ENCODE measurements at regions of chr17 and their contacts with region 1.

Region 1: GRCh38 chr17:3723556-3724369 is at the start of gene HASPIN:
- DNase-seq: peak; percentile 96
- ATAC-seq: peak; percentile 86
- H3K4me3 Mint-ChIP-seq: peak within 1 kb of the TSS; percentile 83
- H3K27ac Mint-ChIP-seq: peak within 1 kb of the TSS; percentile 93
- H3K4me1 Mint-ChIP-seq: peaks cover 58% of the 10 kb centered on the region
- H3K27me3 Mint-ChIP-seq: no peaks in the 10 kb centered on the region
- total RNA-seq, gene HASPIN: 21.0 to 25.2 TPM

Region 2: GRCh38 chr17:3048767-3049471 is 674.8 kb before region 1 on chr17:
- CTCF ChIA-PET with region 1: no interaction called
- POLR2A ChIA-PET with region 1: no interaction called
- intact Hi-C with region 1: loop called in 1 of 2 experiments (anchors 5 kb)
- DNase-seq: peak; percentile 98
- ATAC-seq: peak; percentile 99
- H3K4me3 Mint-ChIP-seq: peak overlapping the region; percentile 86
- H3K27ac Mint-ChIP-seq: peak overlapping the region; percentile 83
- H3K4me1 Mint-ChIP-seq: peaks cover 4% of the 10 kb centered on the region
- H3K27me3 Mint-ChIP-seq: no peaks in the 10 kb centered on the region

Region 3: DNA sequence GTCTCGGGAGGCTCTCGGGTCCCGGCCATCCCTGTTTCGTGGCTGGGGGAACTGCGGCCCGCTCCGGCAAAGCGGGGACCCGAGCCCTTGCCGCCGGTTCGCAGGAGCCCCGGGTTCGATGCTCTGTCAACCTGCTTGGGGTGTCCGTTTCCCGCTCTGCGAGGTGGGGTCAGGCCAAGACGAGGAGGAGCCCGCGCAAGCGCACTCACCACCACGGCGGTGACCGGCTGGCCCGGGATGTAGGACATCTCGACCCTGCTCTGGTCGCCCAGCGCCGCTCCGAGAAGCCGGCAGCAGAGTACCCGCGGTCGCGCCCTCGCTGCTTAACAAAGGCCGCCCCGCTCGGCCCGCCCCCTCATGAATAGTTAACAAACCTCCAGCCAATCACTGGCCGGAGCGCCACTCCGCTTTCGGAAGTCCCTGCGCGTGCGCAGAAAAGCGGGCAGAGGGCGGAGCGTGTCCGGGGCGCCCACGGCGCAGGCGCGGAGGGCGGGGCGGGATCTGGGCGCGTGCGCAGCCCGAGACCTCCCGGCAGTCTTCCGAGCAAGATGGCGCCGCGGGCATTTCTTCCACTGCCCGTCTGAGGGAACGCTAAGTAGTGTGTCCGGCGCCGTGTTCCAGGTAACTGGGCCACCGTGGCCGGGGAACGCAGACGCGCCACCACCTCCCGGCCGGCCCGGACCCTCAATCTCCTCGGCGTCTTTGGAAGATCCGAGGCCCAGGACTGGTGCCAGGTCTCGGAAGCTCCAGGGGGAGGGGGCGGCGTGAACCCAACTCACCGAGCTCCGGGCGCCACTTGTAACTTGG is 55.3 kb before region 1 on chr17 and contains the starts of genes EMC6 and TAX1BP3:
- CTCF ChIA-PET with region 1: interaction called, 3 read pairs
- POLR2A ChIA-PET with region 1: interaction called, 4 read pairs
- intact Hi-C with region 1: loop called in 1 of 2 experiments (anchors 1 kb)
- DNase-seq: peak; percentile 99
- ATAC-seq: peak; percentile 94
- H3K4me3 Mint-ChIP-seq: peak within 1 kb of the TSS; percentile 97
- H3K27ac Mint-ChIP-seq: peak within 1 kb of the TSS; percentile 94
- H3K4me1 Mint-ChIP-seq: peaks cover 21% of the 10 kb centered on the region
- H3K27me3 Mint-ChIP-seq: no peaks in the 10 kb centered on the region
- total RNA-seq, gene EMC6: 43.6 to 44.3 TPM
- total RNA-seq, gene TAX1BP3: 12.0 to 14.6 TPM

Region 4: GRCh38 chr17:3695723-3696411 is 27.9 kb before region 1 on chr17 and contains the start of gene P2RX5:
- CTCF ChIA-PET with region 1: interaction called, 5 read pairs
- POLR2A ChIA-PET with region 1: interaction called, 3 read pairs
- intact Hi-C with region 1: loop called in 1 of 2 experiments (anchors 1 kb)
- DNase-seq: peak; percentile 67
- ATAC-seq: peak; percentile 48
- H3K4me3 Mint-ChIP-seq: peak within 1 kb of the TSS; percentile 81
- H3K27ac Mint-ChIP-seq: peak within 1 kb of the TSS; percentile 94
- H3K4me1 Mint-ChIP-seq: peaks cover 15% of the 10 kb centered on the region
- H3K27me3 Mint-ChIP-seq: no peaks in the 10 kb centered on the region
- total RNA-seq, gene P2RX5: 69.7 to 77.5 TPM

Region 5: DNA sequence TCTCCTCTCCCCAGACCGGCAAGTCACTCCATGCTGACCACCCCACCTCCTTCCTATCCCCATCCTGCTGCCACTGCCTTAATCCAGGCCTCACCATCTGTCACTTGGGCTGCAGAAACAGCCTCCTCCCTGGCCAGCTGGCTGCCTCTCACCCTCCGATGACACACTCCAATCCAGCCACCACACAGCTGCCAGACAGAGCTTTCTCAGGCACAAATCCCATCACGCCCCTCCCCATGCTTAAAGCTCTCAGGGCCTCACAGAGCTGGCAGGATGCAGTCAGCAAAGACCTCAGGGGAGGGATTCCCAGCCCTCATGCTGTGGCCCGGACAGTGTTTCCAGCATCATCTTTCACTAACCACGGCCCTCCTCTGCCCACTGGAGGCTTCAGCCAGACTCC is 155.4 kb after region 1 on chr17:
- CTCF ChIA-PET with region 1: no interaction called
- POLR2A ChIA-PET with region 1: no interaction called
- intact Hi-C with region 1: no loop called
- DNase-seq: no peak
- ATAC-seq: no peak
- H3K4me3 Mint-ChIP-seq: no peak overlapping the region
- H3K27ac Mint-ChIP-seq: no peak overlapping the region
- H3K4me1 Mint-ChIP-seq: no peaks in the 10 kb centered on the region
- H3K27me3 Mint-ChIP-seq: no peaks in the 10 kb centered on the region

Region 6: DNA sequence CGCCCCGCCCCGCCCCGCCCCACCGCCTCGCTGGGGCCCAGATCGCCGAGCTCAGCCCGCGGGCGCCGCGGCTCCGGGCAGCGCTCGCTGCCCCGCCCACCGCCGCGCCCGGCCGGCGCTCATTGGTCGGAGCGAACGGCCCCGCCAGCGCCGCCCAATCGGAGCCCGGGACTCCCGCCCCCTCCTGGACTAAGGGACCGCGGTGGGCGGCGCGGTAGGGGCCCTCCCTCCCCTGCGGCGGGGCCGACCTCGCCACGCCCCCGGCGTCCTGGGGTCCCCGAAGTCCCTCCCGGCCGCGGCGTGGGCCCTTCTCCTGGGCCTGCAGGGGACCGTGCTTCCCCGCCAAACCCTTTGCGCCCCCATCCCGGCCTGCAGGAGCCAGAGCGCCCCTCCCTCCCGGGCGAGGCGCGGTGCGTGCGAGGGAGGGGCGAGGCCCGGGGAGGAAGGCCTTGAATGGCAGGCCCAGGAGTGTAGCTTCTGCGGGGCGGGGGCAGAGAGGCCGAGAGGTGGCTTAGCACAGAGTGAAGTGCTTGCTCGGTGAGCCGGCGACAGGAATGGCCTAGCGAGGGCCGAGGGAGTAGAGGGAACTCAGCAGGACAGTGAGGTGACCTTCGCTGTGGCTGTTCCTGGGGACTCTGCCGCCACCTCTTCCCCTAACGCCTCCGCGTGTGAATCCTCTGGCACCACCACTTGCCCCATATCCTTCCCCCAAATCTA is 169.4 kb after region 1 on chr17 and contains the start of gene CAMKK1:
- CTCF ChIA-PET with region 1: no interaction called
- POLR2A ChIA-PET with region 1: no interaction called
- intact Hi-C with region 1: loop called in 1 of 2 experiments (anchors 5 kb)
- DNase-seq: peak; percentile 94
- ATAC-seq: peak; percentile 88
- H3K4me3 Mint-ChIP-seq: peak within 1 kb of the TSS; percentile 76
- H3K27ac Mint-ChIP-seq: peak within 1 kb of the TSS; percentile 77
- H3K4me1 Mint-ChIP-seq: peaks cover 36% of the 10 kb centered on the region
- H3K27me3 Mint-ChIP-seq: no peaks in the 10 kb centered on the region
- total RNA-seq, gene CAMKK1: 4.5 to 5.4 TPM

Region 7: DNA sequence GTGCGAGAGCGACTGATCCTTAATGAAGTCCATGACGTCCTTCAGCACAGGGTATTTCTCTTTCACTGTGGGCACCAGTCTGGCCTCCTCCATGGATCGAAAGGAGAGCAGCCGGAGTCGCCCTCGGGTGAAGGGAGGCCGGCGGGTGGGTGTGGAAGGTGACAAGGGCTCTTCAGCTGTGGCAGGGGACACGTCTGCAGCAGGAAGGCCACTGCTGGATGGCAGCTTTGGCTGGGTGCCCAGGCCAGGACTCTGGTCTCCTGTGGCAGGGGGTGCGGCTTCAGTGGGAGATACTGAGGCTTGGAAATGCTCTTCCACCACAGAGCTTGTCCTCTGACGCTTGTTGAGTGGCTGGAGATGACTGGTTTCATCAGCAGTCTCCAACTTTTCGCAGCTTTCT is 340.6 kb after region 1 on chr17:
- CTCF ChIA-PET with region 1: no interaction called
- POLR2A ChIA-PET with region 1: no interaction called
- intact Hi-C with region 1: no loop called
- DNase-seq: no peak
- ATAC-seq: no peak
- H3K4me3 Mint-ChIP-seq: no peak overlapping the region
- H3K27ac Mint-ChIP-seq: no peak overlapping the region
- H3K4me1 Mint-ChIP-seq: no peaks in the 10 kb centered on the region
- H3K27me3 Mint-ChIP-seq: no peaks in the 10 kb centered on the region

Measured in activated CD4-positive, alpha-beta T cell treated with anti-CD3 and anti-CD28 coated beads for 36 hours (primary cell).